MCF 10A (cell line): ENCODE measurements at regions of chr1 and their contacts with region 1.

Region 1: GRCh38 chr1:212070720-212071302 is 35.3 kb downstream of the DTL start:
- DNase-seq: peak; percentile 72
- H3K4me3 Mint-ChIP-seq: no peak overlapping the region
- H3K27ac Mint-ChIP-seq: peak overlapping the region; percentile 13
- H3K4me1 Mint-ChIP-seq: no peaks in the 10 kb centered on the region
- H3K27me3 Mint-ChIP-seq: no peaks in the 10 kb centered on the region
- CTCF ChIP-seq: peak; percentile 97

Region 2: DNA sequence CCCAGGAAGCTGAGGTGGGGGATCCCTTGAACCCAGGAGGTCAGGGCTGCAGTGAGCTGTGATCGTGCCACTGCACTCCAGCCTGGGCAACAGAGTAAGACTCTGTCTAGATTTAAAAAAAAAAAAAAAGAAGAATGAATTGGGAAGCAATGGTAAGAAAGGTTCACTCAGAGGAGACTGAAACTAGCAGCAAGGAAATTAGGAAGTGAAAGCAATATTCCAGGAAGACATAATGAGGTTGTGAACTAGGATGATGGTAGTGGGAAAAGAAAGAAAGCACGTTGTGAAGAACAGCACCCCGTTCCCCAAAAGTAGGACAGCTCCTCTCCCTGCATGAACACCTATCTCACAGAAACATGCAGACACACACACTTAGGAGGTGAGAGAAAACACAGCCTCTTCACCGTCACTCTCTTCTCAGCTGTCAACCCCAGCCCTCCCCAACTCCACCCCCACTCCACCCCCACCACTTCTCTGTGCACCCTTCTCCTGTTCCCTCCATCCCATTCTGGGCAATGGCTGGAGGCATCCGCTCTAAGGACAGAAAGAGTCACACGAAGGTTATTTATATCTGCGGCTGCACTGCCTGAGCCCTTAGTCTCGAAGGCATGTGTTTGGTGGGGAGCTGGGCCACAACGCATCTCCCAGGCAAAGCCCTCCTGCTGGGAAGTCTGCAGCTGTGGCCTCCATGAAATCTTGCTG is 138.4 kb before region 1 on chr1:
- CTCF ChIA-PET with region 1: no interaction called
- POLR2A ChIA-PET with region 1: no interaction called
- intact Hi-C with region 1: no loop called
- DNase-seq: no peak
- H3K4me3 Mint-ChIP-seq: no peak overlapping the region
- H3K27ac Mint-ChIP-seq: no peak overlapping the region
- H3K4me1 Mint-ChIP-seq: peaks cover 21% of the 10 kb centered on the region
- H3K27me3 Mint-ChIP-seq: no peaks in the 10 kb centered on the region
- CTCF ChIP-seq: no peak

Region 3: GRCh38 chr1:212045981-212046380 is 24.8 kb before region 1 on chr1:
- CTCF ChIA-PET with region 1: interaction called, 33 read pairs
- POLR2A ChIA-PET with region 1: interaction called, 3 read pairs
- intact Hi-C with region 1: no loop called
- DNase-seq: no peak
- H3K4me3 Mint-ChIP-seq: no peak overlapping the region
- H3K27ac Mint-ChIP-seq: no peak overlapping the region
- H3K4me1 Mint-ChIP-seq: peaks cover 23% of the 10 kb centered on the region
- H3K27me3 Mint-ChIP-seq: no peaks in the 10 kb centered on the region
- CTCF ChIP-seq: no peak

Region 4: GRCh38 chr1:212118167-212118871 is 47.5 kb after region 1 on chr1:
- CTCF ChIA-PET with region 1: interaction called, 18 read pairs
- POLR2A ChIA-PET with region 1: no interaction called
- intact Hi-C with region 1: no loop called
- DNase-seq: peak; percentile 91
- H3K4me3 Mint-ChIP-seq: no peak overlapping the region
- H3K27ac Mint-ChIP-seq: no peak overlapping the region
- H3K4me1 Mint-ChIP-seq: peaks cover 15% of the 10 kb centered on the region
- H3K27me3 Mint-ChIP-seq: no peaks in the 10 kb centered on the region
- CTCF ChIP-seq: no peak

Region 5: DNA sequence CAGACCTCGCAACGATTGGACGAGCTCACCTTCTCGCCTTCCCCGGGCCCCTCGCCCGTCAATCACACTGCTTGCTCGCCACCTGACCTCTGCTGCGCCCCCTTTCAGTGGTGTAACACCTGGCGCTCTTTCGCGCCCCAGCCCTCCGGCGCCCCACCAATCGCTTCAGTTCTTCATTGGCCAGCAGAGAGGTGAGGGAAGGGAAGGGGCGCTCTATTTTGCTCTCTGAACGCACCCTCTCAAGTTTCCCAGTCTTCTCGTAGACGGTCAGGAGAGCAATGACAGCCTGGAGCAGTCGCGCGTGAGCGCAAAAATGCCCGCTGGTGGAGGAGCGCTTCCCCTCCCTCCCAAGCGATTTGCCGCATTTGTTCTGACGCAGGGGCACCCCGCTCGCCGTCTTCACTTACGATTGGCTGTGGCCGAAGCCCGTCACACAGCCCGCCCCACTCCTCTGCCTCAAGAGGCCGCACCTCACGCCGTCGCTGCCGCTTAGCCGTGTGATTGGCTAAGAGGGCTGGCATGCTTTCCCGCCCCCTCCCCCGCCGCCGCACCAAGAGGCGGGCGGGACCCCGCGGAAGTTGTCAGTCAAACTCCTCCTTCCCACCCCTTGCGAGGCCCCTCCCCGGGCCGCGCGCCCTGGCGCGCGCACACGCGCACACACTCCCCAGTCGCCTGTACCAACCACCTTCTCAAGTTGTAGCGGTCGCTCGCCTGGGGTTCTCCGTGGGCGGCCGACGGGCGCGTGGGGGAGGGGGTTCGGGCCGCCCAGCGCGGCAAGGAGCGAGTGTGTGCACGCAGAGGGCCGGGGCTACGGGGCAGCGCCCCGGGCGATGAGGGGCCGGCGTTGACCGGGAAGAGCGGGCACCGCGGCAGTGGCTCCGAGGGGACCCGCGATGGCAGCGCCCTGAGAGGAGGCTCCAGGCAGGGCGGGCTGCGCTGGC is 214.2 kb after region 1 on chr1 and contains the start of gene PPP2R5A:
- CTCF ChIA-PET with region 1: interaction called, 278 read pairs
- POLR2A ChIA-PET with region 1: interaction called, 74 read pairs
- intact Hi-C with region 1: loop called (anchors 1 kb)
- DNase-seq: peak; percentile 100
- H3K4me3 Mint-ChIP-seq: peak within 1 kb of the TSS; percentile 94
- H3K27ac Mint-ChIP-seq: peak within 1 kb of the TSS; percentile 99
- H3K4me1 Mint-ChIP-seq: peaks cover 29% of the 10 kb centered on the region
- H3K27me3 Mint-ChIP-seq: no peaks in the 10 kb centered on the region
- CTCF ChIP-seq: peak; percentile 20
- total RNA-seq, gene PPP2R5A: 37.5 and 38.6 TPM in 2 replicates

Region 6: GRCh38 chr1:212355230-212355969 is 284.6 kb after region 1 on chr1:
- CTCF ChIA-PET with region 1: interaction called, 340 read pairs
- POLR2A ChIA-PET with region 1: interaction called, 4 read pairs
- intact Hi-C with region 1: no loop called
- DNase-seq: no peak
- H3K4me3 Mint-ChIP-seq: no peak overlapping the region
- H3K27ac Mint-ChIP-seq: no peak overlapping the region
- H3K4me1 Mint-ChIP-seq: peaks cover 6% of the 10 kb centered on the region
- H3K27me3 Mint-ChIP-seq: no peaks in the 10 kb centered on the region
- CTCF ChIP-seq: no peak

Region 7: GRCh38 chr1:212469701-212470458 is 399.1 kb after region 1 on chr1:
- CTCF ChIA-PET with region 1: interaction called, 10 read pairs
- POLR2A ChIA-PET with region 1: interaction called, 4 read pairs
- intact Hi-C with region 1: no loop called
- DNase-seq: peak; percentile 96
- H3K4me3 Mint-ChIP-seq: peak overlapping the region; percentile 49
- H3K27ac Mint-ChIP-seq: peak overlapping the region; percentile 90
- H3K4me1 Mint-ChIP-seq: peaks cover 10% of the 10 kb centered on the region
- H3K27me3 Mint-ChIP-seq: no peaks in the 10 kb centered on the region
- CTCF ChIP-seq: no peak